OCI-LY7 (cell line): ENCODE measurements at regions of chr2 and their contacts with region 1.

Region 1: DNA sequence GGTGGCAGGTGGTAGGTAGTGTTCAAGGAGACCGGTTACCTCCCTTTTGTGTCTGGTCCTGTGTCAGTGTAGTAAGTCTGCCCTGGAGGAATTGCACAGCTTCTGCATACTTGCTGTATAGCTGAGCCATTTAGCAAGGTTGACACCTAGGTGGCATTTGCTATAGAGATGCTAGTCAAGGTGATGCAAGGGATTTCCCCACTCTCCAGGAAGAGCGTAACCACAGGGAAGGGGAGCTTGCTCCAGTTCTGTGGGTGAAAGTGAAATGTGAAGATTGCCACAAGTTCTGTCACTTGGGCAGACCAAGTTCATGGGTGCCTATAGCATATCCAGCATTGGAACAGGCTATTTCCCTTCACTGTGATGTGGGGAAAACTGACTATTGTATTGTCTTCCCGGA is 28.1 kb downstream of the NAT8 start:
- DNase-seq: no peak
- H3K4me3 ChIP-seq: no peak overlapping the region
- H3K27ac ChIP-seq: no peak overlapping the region
- H3K4me1 ChIP-seq: no peaks in the 10 kb centered on the region
- CTCF ChIP-seq: no peak

Region 2: GRCh38 chr2:73601780-73602179 is 12.3 kb before region 1 on chr2:
- CTCF ChIA-PET with region 1: no interaction called
- POLR2A ChIA-PET with region 1: no interaction called
- intact Hi-C with region 1: loop called (anchors 1 kb)
- DNase-seq: no peak
- H3K4me3 ChIP-seq: no peak overlapping the region
- H3K27ac ChIP-seq: no peak overlapping the region
- H3K4me1 ChIP-seq: no peaks in the 10 kb centered on the region
- CTCF ChIP-seq: no peak